Activated naive CD4-positive, alpha-beta T cell treated with anti-CD3 and anti-CD28 coated beads for 36 hours (primary cell): ENCODE measurements at regions of chr12 and their contacts with region 1.

Region 1: GRCh38 chr12:117367011-117367638 is 5.7 kb upstream of the NOS1 start:
- DNase-seq: peak; percentile 77
- H3K4me3 Mint-ChIP-seq: no peak overlapping the region
- H3K27ac Mint-ChIP-seq: no peak overlapping the region
- H3K4me1 Mint-ChIP-seq: no peaks in the 10 kb centered on the region
- H3K27me3 Mint-ChIP-seq: peaks cover 39% of the 10 kb centered on the region

Region 2: DNA sequence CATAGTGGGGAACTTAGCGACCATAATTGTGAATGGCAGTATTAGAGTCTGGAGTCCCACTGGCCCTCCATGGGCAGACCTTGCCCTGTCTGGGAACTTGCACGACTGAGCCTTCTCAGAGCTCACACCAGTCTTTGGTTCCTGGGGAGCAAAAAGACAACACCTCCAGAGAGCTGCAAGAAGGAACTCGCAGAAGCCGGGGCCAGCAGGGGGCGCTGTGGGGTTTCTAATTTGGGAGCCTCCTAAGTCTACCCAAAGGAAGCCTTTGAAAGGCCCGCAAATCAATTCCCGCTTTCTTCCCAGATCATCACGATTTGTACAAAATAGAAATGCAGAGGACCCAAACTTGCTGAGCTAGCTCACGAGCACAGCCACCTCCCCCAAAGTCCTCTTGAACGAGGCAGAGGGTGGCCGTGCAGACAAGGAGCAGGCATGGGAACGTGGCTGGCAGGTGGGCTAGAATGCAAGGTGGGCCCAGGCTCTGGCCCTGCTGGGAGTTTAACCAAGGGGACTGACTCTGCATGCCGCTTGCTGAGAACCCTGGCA is 130.6 kb before region 1 on chr12:
- CTCF ChIA-PET with region 1: interaction called, 3 read pairs
- intact Hi-C with region 1: loop called (anchors 1 kb)
- DNase-seq: peak; percentile 92
- H3K4me3 Mint-ChIP-seq: no peak overlapping the region
- H3K27ac Mint-ChIP-seq: no peak overlapping the region
- H3K4me1 Mint-ChIP-seq: no peaks in the 10 kb centered on the region
- H3K27me3 Mint-ChIP-seq: peaks cover 15% of the 10 kb centered on the region

Region 3: GRCh38 chr12:117587631-117588287 is 220.6 kb after region 1 on chr12:
- CTCF ChIA-PET with region 1: interaction called, 17 read pairs
- intact Hi-C with region 1: loop called (anchors 1 kb)
- DNase-seq: peak; percentile 61
- H3K4me3 Mint-ChIP-seq: no peak overlapping the region
- H3K27ac Mint-ChIP-seq: no peak overlapping the region
- H3K4me1 Mint-ChIP-seq: no peaks in the 10 kb centered on the region
- H3K27me3 Mint-ChIP-seq: peaks cover 16% of the 10 kb centered on the region

Region 4: DNA sequence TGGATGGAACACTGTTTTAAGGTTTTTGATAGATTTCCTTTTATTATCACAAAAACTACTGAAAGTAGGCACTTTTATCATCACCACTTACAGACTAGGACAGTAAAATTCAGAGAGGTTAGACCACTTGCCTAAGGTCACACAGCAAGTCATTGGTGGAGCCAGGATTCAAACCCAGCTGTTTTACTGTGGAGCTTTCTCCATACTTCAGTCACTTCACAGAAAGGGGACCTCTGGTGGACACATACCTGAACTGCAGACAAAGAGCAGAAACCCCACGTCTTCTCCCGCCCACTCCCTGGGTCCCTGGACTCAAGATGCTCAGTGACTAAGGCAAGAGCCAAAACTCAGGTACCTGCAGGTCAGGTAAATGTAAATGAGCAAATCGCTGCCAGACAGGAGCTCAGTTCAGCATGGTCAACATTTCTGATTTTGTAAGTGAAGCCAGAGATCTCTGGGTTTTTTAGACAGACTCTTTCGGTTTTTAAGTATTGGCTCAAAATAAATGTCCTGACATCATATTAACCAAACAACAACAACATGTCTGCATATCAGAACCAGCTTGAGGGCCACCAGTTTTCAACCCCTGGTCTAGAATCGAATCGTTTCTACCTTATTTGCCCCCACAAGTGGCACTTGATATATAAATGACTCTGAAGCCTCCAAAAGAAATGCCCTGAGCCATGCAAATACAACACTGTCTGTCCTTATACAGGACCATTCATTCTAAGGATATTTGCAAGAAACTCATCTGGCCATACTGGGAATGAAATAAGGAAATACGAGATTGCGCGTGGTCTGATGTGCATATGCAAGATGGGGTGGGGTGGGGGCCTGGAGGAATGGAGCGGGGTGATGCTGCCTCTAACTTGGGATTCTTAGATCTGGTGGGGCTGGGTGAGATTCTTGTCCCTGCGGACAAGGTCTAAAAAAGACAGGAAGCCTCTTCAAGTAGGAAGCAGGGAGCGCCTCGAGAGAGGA is 490.8 kb after region 1 on chr12:
- CTCF ChIA-PET with region 1: interaction called, 5 read pairs
- intact Hi-C with region 1: loop called (anchors 5 kb)
- DNase-seq: peak; percentile 76
- H3K4me3 Mint-ChIP-seq: no peak overlapping the region
- H3K27ac Mint-ChIP-seq: no peak overlapping the region
- H3K4me1 Mint-ChIP-seq: no peaks in the 10 kb centered on the region
- H3K27me3 Mint-ChIP-seq: peaks cover 2% of the 10 kb centered on the region